B cell (primary cell): ENCODE measurements at regions of chr2 and their contacts with region 1.

Region 1: GRCh38 chr2:30231212-30231995 is at the start of gene LBH:
- DNase-seq: peak; percentile 97
- ATAC-seq: peak; percentile 56
- H3K4me3 ChIP-seq: peak within 1 kb of the TSS; percentile 84 to 94 (median 93)
- H3K4me3 Mint-ChIP-seq: peak within 1 kb of the TSS; percentile 80
- H3K27ac ChIP-seq: peak within 1 kb of the TSS; percentile 93 to 94
- H3K27ac Mint-ChIP-seq: peak within 1 kb of the TSS; percentile 98
- H3K4me1 ChIP-seq: peaks cover 38 to 48% of the 10 kb centered on the region in 2 donors
- H3K4me1 Mint-ChIP-seq: peaks cover 47% of the 10 kb centered on the region
- H3K27me3 ChIP-seq: no peaks in the 10 kb centered on the region
- H3K27me3 Mint-ChIP-seq: no peaks in the 10 kb centered on the region
- CTCF ChIP-seq: no peak
- total RNA-seq, gene LBH: 197 and 201 TPM in 2 replicates

Region 2: DNA sequence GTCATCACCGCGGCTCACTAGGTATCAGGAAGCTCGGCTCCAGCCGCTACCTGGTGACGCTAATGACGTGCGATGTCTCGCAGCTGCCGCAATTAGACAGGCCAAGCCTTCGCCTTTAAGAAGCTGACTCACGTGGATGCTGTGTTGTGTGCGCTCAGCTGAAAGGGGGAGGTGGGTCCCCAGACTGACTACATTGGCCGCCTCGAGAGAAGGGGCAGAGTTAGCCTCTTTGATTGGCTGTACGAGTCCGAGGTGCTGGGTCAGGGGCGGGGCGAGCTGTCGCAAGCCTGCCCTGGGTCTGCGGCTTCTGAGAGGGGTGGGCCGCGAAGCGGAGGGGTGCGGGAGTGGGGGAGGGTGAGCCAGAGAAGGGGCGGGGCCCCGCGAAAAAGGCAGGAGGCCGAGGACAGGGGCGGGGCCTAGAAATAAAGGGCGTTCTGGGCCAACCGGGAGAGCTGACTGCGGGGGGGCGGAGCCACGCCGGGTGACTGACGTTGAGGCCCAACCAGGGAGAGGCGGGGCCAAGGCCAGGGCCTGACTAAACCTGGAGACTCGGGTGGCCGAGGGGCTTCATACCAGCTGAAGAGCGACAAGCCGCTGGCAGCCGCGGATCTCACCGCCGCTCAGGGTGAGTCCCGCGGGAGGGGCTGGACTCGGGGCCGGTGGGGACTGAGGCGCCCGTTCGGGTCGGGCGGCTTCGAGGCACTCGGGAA is 84.8 kb before region 1 on chr2 and contains the start of gene YPEL5:
- CTCF ChIA-PET with region 1: interaction called, 24 read pairs
- POLR2A ChIA-PET with region 1: interaction called, 13 read pairs
- intact Hi-C with region 1: loop called (anchors 1 kb)
- DNase-seq: peak; percentile 100
- ATAC-seq: peak; percentile 81
- H3K4me3 ChIP-seq: peak within 1 kb of the TSS; percentile 87 to 98 (median 94)
- H3K4me3 Mint-ChIP-seq: peak within 1 kb of the TSS; percentile 90
- H3K27ac ChIP-seq: peak within 1 kb of the TSS; percentile 99
- H3K27ac Mint-ChIP-seq: peak within 1 kb of the TSS; percentile 100
- H3K4me1 ChIP-seq: peaks cover 38 to 46% of the 10 kb centered on the region in 2 donors
- H3K4me1 Mint-ChIP-seq: peaks cover 45% of the 10 kb centered on the region
- H3K27me3 ChIP-seq: no peaks in the 10 kb centered on the region
- H3K27me3 Mint-ChIP-seq: no peaks in the 10 kb centered on the region
- CTCF ChIP-seq: no peak
- total RNA-seq, gene YPEL5: 115 and 117 TPM in 2 replicates

Region 3: DNA sequence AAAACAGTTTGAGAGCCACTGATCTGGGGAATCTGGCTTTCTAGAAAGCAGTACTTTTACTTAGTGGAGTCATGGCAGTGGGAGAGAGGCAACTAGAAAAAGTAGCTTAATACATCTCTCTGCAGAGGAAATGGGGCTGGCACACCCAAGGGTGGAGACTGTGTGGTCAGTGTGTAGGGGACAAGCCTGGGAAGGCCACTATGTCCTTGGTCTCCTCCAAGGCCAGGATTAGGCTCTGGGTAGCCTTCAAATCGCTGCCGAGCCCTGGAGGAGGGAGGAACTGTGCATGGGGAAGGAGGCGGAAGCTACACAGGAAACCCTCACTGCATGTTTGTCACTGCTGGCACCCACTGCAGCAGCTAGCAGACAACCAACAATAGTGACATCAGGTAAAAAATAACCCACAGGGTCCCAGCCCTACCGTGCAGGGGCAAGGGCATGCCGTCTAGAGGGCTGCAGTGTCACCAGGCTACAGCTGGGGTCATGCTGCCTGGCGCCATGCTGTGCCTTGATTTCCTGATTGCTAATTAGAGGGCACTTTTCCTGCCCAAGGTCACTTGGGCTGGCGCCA is 34.7 kb after region 1 on chr2:
- CTCF ChIA-PET with region 1: interaction called, 6 read pairs
- POLR2A ChIA-PET with region 1: interaction called, 21 read pairs
- intact Hi-C with region 1: loop called (anchors 5 kb)
- DNase-seq: peak; percentile 61
- ATAC-seq: peak; percentile 85
- H3K4me3 ChIP-seq: peak overlapping the region in 3 of 5 experiments; percentile 4 to 22 (median 16)
- H3K4me3 Mint-ChIP-seq: peak overlapping the region; percentile 85
- H3K27ac ChIP-seq: peak overlapping the region; percentile 76 to 90
- H3K27ac Mint-ChIP-seq: peak overlapping the region; percentile 99
- H3K4me1 ChIP-seq: peaks cover 64 to 72% of the 10 kb centered on the region in 2 donors
- H3K4me1 Mint-ChIP-seq: peaks cover 81% of the 10 kb centered on the region
- H3K27me3 ChIP-seq: no peaks in the 10 kb centered on the region
- H3K27me3 Mint-ChIP-seq: no peaks in the 10 kb centered on the region
- CTCF ChIP-seq: no peak

Region 4: GRCh38 chr2:30287857-30288513 is 56.6 kb after region 1 on chr2:
- CTCF ChIA-PET with region 1: interaction called, 17 read pairs
- POLR2A ChIA-PET with region 1: interaction called, 59 read pairs
- intact Hi-C with region 1: loop called (anchors 1 kb)
- DNase-seq: peak; percentile 77
- ATAC-seq: peak; percentile 85
- H3K4me3 ChIP-seq: peak overlapping the region; percentile 19 to 69 (median 34)
- H3K4me3 Mint-ChIP-seq: peak overlapping the region; percentile 58
- H3K27ac ChIP-seq: peak overlapping the region; percentile 81 to 86
- H3K27ac Mint-ChIP-seq: peak overlapping the region; percentile 84
- H3K4me1 ChIP-seq: peaks cover 83 to 91% of the 10 kb centered on the region in 2 donors
- H3K4me1 Mint-ChIP-seq: peaks cover 82% of the 10 kb centered on the region
- H3K27me3 ChIP-seq: no peaks in the 10 kb centered on the region
- H3K27me3 Mint-ChIP-seq: no peaks in the 10 kb centered on the region
- CTCF ChIP-seq: no peak

Region 5: GRCh38 chr2:30421604-30422443 is 190.4 kb after region 1 on chr2:
- CTCF ChIA-PET with region 1: interaction called, 6 read pairs
- POLR2A ChIA-PET with region 1: interaction called, 14 read pairs
- intact Hi-C with region 1: loop called (anchors 5 kb)
- DNase-seq: peak; percentile 19
- ATAC-seq: peak; percentile 59
- H3K4me3 ChIP-seq: peak overlapping the region in 1 of 5 experiments; percentile 41
- H3K4me3 Mint-ChIP-seq: peak overlapping the region; percentile 64
- H3K27ac ChIP-seq: peak overlapping the region; percentile 64 to 81
- H3K27ac Mint-ChIP-seq: peak overlapping the region; percentile 82
- H3K4me1 ChIP-seq: peaks cover 28 to 32% of the 10 kb centered on the region in 2 donors
- H3K4me1 Mint-ChIP-seq: peaks cover 31% of the 10 kb centered on the region
- H3K27me3 ChIP-seq: no peaks in the 10 kb centered on the region
- H3K27me3 Mint-ChIP-seq: no peaks in the 10 kb centered on the region
- CTCF ChIP-seq: no peak

Region 6: DNA sequence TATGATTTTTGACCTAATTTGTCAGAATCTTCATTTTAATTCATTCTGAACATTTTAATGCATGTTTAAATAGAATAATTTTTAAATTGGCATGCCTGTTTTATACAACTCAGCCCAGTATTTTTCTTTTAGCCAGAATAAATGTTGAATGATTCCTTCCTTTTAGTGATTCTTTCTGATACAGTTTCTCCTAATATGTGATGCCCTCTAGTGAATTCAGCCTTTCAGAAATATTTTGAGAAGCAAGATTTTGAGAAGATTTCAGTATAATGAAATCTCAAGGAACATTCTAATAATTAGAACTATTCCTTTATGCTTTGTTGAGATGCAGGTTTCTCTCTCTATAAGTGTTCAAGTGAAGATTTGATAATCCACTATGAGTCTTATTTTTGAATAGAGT is 244.1 kb after region 1 on chr2:
- CTCF ChIA-PET with region 1: interaction called, 33 read pairs
- POLR2A ChIA-PET with region 1: interaction called, 5 read pairs
- intact Hi-C with region 1: no loop called
- DNase-seq: no peak
- ATAC-seq: no peak
- H3K4me3 ChIP-seq: no peak overlapping the region
- H3K4me3 Mint-ChIP-seq: no peak overlapping the region
- H3K27ac ChIP-seq: no peak overlapping the region
- H3K27ac Mint-ChIP-seq: no peak overlapping the region
- H3K4me1 ChIP-seq: peaks cover 8 to 17% of the 10 kb centered on the region in 2 donors
- H3K4me1 Mint-ChIP-seq: peaks cover 38% of the 10 kb centered on the region
- H3K27me3 ChIP-seq: no peaks in the 10 kb centered on the region
- H3K27me3 Mint-ChIP-seq: no peaks in the 10 kb centered on the region
- CTCF ChIP-seq: no peak

Region 7: DNA sequence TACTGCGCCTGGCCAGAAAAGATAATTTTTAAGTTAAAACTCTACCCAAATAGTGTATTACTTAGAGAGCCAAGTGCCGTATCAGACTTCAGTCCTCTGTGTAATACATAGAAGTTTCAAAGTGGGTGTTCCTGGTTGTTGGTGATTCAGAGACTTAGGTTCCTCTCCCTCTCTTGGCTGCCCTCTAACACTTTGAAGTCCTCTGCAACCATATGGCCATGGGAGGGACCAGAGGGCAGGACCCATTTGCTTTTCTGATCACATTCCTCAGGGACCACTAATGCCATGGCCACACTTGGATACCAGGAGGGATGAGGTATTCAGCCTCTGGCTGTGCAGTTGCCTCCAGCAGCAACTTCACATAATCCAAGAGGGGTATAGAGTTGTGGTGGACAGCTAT is 444.4 kb after region 1 on chr2:
- CTCF ChIA-PET with region 1: no interaction called
- POLR2A ChIA-PET with region 1: no interaction called
- intact Hi-C with region 1: no loop called
- DNase-seq: no peak
- ATAC-seq: no peak
- H3K4me3 ChIP-seq: no peak overlapping the region
- H3K4me3 Mint-ChIP-seq: no peak overlapping the region
- H3K27ac ChIP-seq: no peak overlapping the region
- H3K27ac Mint-ChIP-seq: no peak overlapping the region
- H3K4me1 ChIP-seq: no peaks in the 10 kb centered on the region
- H3K4me1 Mint-ChIP-seq: peaks cover 4% of the 10 kb centered on the region
- H3K27me3 ChIP-seq: peaks cover 0 to 3% (median 0%) of the 10 kb centered on the region in 4 experiments
- H3K27me3 Mint-ChIP-seq: peaks cover 15% of the 10 kb centered on the region
- CTCF ChIP-seq: no peak

Region 8: DNA sequence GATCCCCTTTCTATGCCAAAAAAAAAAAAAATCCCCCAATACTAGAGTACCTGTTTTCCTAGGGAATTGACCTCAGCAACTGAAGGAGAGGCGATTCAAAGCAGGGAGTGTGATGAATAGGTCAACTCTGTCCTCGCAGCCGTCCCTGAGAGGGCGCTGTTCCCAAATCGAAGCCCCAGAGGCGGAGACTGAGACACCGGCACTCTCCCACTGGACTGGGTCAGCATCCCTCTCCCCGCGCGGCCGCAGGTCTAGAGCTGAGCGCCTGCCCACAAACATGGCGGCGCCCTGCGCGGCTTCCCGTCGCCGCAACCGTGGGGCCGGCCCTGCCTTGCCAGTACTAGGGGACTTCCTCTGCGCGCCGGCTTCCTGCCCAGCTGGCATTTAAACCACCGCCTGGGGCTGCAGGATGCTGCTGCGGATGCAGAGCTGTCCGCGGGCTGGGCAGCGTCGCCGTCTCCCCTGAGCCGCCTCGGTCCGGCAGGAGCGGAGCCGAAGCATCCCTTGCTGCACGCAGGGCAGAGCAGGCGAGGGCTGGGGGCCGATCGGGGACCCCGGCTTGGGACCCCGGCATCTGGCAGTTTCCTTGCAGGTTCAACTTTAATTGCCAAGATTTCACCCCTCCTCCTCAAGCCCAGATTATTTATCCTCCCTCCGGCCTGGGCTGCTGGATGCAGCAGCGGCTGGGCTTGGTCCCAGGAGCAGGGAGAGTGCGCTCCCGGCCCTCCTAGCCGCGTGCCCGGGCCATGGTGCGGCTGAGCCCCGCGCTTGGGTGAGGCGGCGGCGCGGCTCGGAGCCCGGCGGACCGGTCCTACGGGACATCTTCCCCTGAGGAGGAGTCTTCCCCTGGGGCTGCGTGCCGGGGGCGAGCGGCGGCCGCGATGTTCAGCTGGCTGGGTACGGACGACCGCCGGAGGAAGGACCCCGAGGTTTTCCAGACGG is 1002.6 kb after region 1 on chr2 and contains the start of gene EHD3:
- CTCF ChIA-PET with region 1: no interaction called
- POLR2A ChIA-PET with region 1: interaction called, 3 read pairs
- intact Hi-C with region 1: loop called (anchors 5 kb)
- DNase-seq: peak; percentile 86
- ATAC-seq: peak; percentile 97
- H3K4me3 ChIP-seq: peak within 1 kb of the TSS; percentile 46 to 79 (median 70)
- H3K4me3 Mint-ChIP-seq: peak within 1 kb of the TSS; percentile 94
- H3K27ac ChIP-seq: peak within 1 kb of the TSS; percentile 62 to 69
- H3K27ac Mint-ChIP-seq: peak within 1 kb of the TSS; percentile 80
- H3K4me1 ChIP-seq: peaks cover 28 to 35% of the 10 kb centered on the region in 2 donors
- H3K4me1 Mint-ChIP-seq: peaks cover 45% of the 10 kb centered on the region
- H3K27me3 ChIP-seq: no peaks in the 10 kb centered on the region
- H3K27me3 Mint-ChIP-seq: no peaks in the 10 kb centered on the region
- CTCF ChIP-seq: no peak
- total RNA-seq, gene EHD3: 60.4 and 60.5 TPM in 2 replicates